Posterior vena cava (tissue), 2 donors: ENCODE measurements at regions of chr17 and their contacts with region 1.

Region 1: DNA sequence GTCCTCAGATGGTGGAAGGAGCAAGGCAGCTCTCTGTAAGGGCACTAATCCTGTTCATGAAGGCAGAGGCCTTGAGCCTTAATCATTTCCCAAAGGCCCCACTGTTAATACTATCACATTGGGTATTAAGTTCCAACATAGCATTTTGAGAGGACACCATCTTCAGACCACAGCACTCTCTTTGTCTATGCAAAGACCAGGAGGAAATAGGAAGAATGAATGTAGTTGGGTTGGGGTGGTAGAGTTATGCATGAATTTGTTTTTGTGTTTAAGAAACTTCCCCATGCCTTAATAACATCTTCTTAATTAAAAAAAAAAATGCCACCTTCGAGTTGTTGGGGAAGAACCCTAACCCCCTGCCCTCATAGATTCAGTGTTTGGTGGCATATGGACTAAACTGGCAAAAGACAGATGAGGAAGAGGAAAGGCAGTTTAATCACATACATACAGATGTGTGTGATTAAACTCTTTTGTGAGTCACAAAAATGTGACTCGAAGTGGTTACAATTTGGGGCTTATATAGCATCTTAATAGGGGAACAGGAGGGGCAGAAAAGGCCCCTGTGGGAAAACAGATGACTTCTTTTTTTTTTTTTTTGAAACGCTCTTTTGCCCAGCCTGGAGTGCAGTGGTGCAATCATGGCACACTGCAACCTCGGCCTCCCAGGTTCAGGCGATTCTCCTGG is 35.0 kb upstream of the SLC5A10 start:
- DNase-seq: no peak

Region 2: DNA sequence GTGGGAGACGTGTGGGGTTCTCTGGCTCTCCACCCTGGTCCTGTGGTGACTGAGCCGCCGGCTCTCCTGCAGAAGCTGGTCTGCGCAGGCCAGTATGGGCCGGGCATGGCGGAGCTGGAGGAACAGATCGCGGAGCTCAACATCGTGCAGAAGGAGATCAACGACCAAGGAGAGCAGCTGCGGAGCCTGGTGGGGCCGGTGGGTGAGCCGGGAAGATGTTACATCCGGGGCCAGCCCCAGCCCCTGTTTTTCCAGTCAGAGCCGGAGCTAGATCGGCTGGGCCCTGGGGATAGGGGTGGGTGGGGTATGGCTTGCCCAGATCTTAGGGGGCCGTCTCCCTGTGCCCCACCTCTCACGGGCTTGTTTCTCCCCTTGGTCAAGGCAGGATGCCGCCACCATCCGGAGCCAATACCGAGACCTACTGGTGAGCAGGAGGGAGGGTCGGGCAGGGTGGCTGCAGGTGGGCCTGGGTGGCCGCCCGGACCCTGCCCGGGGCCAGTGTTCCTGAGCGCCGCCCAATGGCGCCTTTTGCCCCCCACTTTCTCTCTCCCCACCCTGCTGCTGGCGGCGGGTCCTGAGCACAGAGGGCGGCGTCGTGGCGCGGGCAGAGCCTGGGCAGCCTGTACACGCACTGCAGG is 534.4 kb before region 1 on chr17:
- intact Hi-C with region 1: loop called in 1 of 2 experiments (anchors 10 kb)
- DNase-seq: peak; percentile 74

Region 3: GRCh38 chr17:18889658-18890057 is 27.3 kb before region 1 on chr17:
- intact Hi-C with region 1: loop called in 1 of 2 experiments (anchors 2 kb)
- DNase-seq: no peak

Region 4: GRCh38 chr17:19614900-19615299 is 697.9 kb after region 1 on chr17:
- intact Hi-C with region 1: no loop called
- DNase-seq: no peak